ENCODE measurements at regions of chr17 and their contacts with region 1.

Region 1: DNA sequence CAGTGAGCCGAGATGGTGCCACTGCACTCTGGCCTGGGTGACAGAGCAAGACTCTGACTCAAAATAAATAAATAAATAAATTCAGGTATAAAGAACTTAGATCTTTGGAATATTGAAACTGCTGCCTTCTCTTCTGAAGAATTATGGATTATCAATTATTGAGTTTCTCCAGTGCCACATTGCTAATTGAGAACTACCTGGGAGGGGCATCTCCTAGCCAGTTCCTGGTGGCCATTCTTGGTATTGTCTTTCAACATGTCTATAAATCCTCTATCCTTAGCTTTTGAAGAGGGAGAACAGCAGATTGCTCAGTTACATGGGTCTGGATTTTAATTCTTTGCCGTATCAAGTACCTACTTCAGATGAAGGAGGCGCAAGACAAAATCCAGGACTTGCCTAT is 29.2 kb downstream of the CALCOCO2 start:
- DNase-seq: no peak
- ATAC-seq: peak; percentile 54; the same call in 1 of the 3 replicates
- H3K4me3 ChIP-seq: no peak overlapping the region
- H3K27ac ChIP-seq: no peak overlapping the region
- H3K4me1 ChIP-seq: peaks cover 0 to 2% of the 10 kb centered on the region in 2 experiments; a peak in 1 of 5 replicates
- H3K27me3 ChIP-seq: no peaks in the 10 kb centered on the region
- CTCF ChIP-seq: 0 out of 6 replicates have a peak, but pooled peaks of 2 of the 3 experiments have one; percentile 5 to 23
- EP300 ChIP-seq: no peak
- POLR2A ChIP-seq: no peak
- RAD21 ChIP-seq: no peak

Region 2: GRCh38 chr17:48830840-48831548 is 29.0 kb before region 1 on chr17 and contains the start of gene CALCOCO2:
- CTCF ChIA-PET with region 1: no interaction called
- POLR2A ChIA-PET with region 1: interaction called, 11 read pairs
- in situ Hi-C with region 1: no loop called
- intact Hi-C with region 1: no loop called
- DNase-seq: peak; percentile 96 to 98 (median 97)
- ATAC-seq: peak; percentile 98
- H3K4me3 ChIP-seq: peak within 1 kb of the TSS; percentile 93
- H3K27ac ChIP-seq: peak within 1 kb of the TSS; percentile 85
- H3K4me1 ChIP-seq: peaks cover 0 to 16% of the 10 kb centered on the region in 2 experiments; a peak in 4 of 5 replicates
- H3K27me3 ChIP-seq: no peaks in the 10 kb centered on the region
- CTCF ChIP-seq: 0 out of 6 replicates have a peak, but pooled peaks of 2 of the 3 experiments have one; percentile 5 to 16
- EP300 ChIP-seq: no peak
- POLR2A ChIP-seq: peak; percentile 82
- RAD21 ChIP-seq: no peak
- polyA plus RNA-seq, gene CALCOCO2: 34.6 to 85.9 TPM

Measured in K562 (cell line).